ENCODE measurements at regions of chr9 and their contacts with region 1.

Region 1: DNA sequence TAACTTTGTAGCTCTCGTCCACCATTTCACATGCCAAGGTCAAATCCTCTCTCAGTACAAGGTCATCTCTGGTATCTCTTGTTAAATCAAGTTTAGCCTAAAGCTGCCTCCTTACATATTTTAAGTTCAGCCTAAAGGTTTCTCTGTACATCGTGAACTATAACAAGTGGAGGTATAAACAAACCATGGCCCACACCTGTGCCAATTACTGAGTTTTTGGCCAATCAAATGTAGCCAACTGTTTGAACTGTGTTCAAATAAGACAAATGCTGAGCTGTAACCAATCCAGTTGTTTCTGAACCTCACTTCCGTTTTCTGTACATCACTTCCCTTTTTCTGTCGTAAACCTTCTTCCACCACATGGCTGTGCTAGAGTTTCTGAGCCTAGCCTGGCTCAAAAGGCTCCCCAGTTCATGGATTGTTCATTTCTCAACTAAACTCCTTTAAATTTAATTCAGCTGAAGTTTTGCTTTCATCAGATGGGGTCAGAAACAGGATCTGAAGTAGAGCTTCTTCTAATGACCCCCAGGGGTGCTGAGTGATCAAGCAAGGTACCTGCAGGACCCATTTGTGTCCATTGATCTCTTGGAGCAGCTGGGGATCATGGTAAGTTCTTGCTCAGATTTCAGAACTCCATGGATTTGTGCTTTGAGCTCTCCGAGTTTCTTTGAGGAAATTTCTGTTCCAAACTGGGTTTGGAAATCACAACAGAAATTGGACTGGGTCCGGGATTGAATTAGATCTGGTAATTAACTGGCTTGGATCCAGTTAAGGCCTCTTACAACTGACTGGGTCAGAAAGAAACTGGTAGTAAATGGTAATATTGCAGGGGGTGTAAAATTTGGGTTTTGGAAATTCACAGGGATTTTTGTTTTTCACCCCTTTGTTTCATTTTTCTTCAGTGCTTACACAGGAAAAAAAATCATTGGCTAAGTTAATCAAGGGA is 11.0 kb upstream of the NANS start:
- DNase-seq: peak in 9 of 14 experiments; percentile 3 to 87 (median 19)
- ATAC-seq: peak; percentile 98
- H3K4me3 ChIP-seq: peak overlapping the region; percentile 50
- H3K4me3 Mint-ChIP-seq: peak overlapping the region; percentile 45
- H3K27ac ChIP-seq: peak overlapping the region in 1 of 2 donors; percentile 61
- H3K27ac Mint-ChIP-seq: peak overlapping the region; percentile 86
- H3K4me1 ChIP-seq: peaks cover 17% of the 10 kb centered on the region
- H3K4me1 Mint-ChIP-seq: peaks cover 30% of the 10 kb centered on the region
- H3K27me3 ChIP-seq: no peaks in the 10 kb centered on the region
- H3K27me3 Mint-ChIP-seq: no peaks in the 10 kb centered on the region
- CTCF ChIP-seq: peak; percentile 18

Region 2: GRCh38 chr9:97510797-97511761 is 534.4 kb before region 1 on chr9:
- CTCF ChIA-PET with region 1: no interaction called
- POLR2A ChIA-PET with region 1: no interaction called
- intact Hi-C with region 1: no loop called
- DNase-seq: no peak
- ATAC-seq: no peak
- H3K4me3 ChIP-seq: no peak overlapping the region
- H3K4me3 Mint-ChIP-seq: no peak overlapping the region
- H3K27ac ChIP-seq: no peak overlapping the region
- H3K27ac Mint-ChIP-seq: no peak overlapping the region
- H3K4me1 ChIP-seq: no peaks in the 10 kb centered on the region
- H3K4me1 Mint-ChIP-seq: no peaks in the 10 kb centered on the region
- H3K27me3 ChIP-seq: peaks cover 0 to 8% of the 10 kb centered on the region in 2 experiments
- H3K27me3 Mint-ChIP-seq: peaks cover 22% of the 10 kb centered on the region
- CTCF ChIP-seq: no peak

Region 3: DNA sequence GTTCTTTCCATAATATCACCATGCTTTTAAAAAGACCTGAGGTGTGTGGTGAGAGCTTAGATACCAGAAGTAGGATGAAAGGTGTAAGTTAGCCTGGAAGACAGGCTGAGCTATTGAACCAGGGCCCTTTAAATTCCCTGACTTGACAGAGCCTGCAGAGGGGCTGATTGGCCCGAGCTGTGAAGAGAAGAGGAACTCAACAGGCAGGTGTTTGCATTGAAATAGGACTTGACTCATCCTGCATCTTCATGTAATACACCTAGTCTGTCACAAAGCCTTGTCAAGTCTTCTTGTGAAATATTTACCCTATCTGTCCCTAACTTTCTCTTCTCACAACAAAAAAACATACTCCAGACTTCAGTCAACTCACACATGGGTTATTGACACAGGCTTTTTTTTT is 79.0 kb before region 1 on chr9:
- CTCF ChIA-PET with region 1: no interaction called
- POLR2A ChIA-PET with region 1: no interaction called
- intact Hi-C with region 1: no loop called
- DNase-seq: no peak
- ATAC-seq: no peak
- H3K4me3 ChIP-seq: no peak overlapping the region
- H3K4me3 Mint-ChIP-seq: no peak overlapping the region
- H3K27ac ChIP-seq: no peak overlapping the region
- H3K27ac Mint-ChIP-seq: no peak overlapping the region
- H3K4me1 ChIP-seq: no peaks in the 10 kb centered on the region
- H3K4me1 Mint-ChIP-seq: peaks cover 11% of the 10 kb centered on the region
- H3K27me3 ChIP-seq: no peaks in the 10 kb centered on the region
- H3K27me3 Mint-ChIP-seq: peaks cover 4% of the 10 kb centered on the region
- CTCF ChIP-seq: no peak

Region 4: GRCh38 chr9:98056269-98057137 is 11.0 kb after region 1 on chr9 and contains the start of gene NANS:
- CTCF ChIA-PET with region 1: interaction called, 11 read pairs
- POLR2A ChIA-PET with region 1: interaction called, 19 read pairs
- intact Hi-C with region 1: loop called in 1 of 2 experiments (anchors 1 kb)
- DNase-seq: peak; percentile 81 to 95 (median 88)
- ATAC-seq: peak; percentile 92
- H3K4me3 ChIP-seq: peak within 1 kb of the TSS; percentile 71
- H3K4me3 Mint-ChIP-seq: peak within 1 kb of the TSS; percentile 98
- H3K27ac ChIP-seq: peak within 1 kb of the TSS; percentile 64 to 75
- H3K27ac Mint-ChIP-seq: peak within 1 kb of the TSS; percentile 93
- H3K4me1 ChIP-seq: peaks cover 27% of the 10 kb centered on the region
- H3K4me1 Mint-ChIP-seq: peaks cover 28% of the 10 kb centered on the region
- H3K27me3 ChIP-seq: no peaks in the 10 kb centered on the region
- H3K27me3 Mint-ChIP-seq: no peaks in the 10 kb centered on the region
- CTCF ChIP-seq: no peak
- total RNA-seq, gene NANS: 70.5 to 74.0 TPM

Measured in CD4-positive, alpha-beta T cell (primary cell).